Esophagus squamous epithelium (tissue), 5 donors: ENCODE measurements at regions of chr19 and their contacts with region 1.

Region 1: DNA sequence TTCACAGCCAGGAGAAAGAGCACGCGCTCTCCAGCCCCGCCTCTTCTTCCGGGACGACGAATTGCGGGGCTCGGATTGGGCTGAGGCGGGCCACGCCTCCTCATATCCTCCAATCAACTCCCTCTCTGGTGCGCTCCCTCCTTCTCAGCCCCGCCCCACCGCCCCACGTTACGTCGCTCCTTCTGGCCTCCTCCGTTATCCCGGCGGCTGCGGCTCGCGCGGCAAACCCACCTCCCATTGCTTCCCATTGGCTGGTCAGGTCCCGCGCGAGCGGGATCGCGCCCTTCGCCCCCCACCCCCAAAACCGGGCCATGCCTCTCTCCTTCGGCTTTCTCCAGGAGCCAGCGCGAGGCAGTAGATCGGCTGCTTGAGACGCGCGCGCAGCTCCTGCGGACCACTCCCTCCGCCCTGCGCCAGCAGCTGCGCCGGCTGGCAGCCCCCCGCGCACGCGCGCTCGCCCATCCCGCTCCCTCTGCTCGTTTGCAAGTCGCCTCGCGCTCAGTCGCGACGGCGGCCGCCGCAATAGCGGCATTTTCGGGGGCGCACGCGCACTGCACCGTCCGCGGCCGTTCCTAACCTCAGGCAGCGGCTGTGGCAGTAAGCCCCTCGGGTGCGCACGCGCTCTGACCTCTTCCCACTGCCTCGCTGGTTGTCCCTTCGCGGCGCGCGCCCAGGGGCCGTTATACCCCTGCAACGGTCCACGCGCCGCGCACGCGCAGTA is 512 bp upstream of the ARHGAP35 start:
- DNase-seq: peak; percentile 87
- H3K4me3 ChIP-seq: peak overlapping the region; percentile 80 to 98 (median 97)
- H3K27ac ChIP-seq: peak overlapping the region; percentile 93 to 99 (median 98)
- H3K4me1 ChIP-seq: peaks cover 40 to 73% (median 51%) of the 10 kb centered on the region in 3 donors
- H3K27me3 ChIP-seq: no peaks in the 10 kb centered on the region
- CTCF ChIP-seq: peak in 2 of 6 experiments; percentile 6 to 12
- POLR2A ChIP-seq: peak in 2 of 4 donors; percentile 74 to 85

Region 2: DNA sequence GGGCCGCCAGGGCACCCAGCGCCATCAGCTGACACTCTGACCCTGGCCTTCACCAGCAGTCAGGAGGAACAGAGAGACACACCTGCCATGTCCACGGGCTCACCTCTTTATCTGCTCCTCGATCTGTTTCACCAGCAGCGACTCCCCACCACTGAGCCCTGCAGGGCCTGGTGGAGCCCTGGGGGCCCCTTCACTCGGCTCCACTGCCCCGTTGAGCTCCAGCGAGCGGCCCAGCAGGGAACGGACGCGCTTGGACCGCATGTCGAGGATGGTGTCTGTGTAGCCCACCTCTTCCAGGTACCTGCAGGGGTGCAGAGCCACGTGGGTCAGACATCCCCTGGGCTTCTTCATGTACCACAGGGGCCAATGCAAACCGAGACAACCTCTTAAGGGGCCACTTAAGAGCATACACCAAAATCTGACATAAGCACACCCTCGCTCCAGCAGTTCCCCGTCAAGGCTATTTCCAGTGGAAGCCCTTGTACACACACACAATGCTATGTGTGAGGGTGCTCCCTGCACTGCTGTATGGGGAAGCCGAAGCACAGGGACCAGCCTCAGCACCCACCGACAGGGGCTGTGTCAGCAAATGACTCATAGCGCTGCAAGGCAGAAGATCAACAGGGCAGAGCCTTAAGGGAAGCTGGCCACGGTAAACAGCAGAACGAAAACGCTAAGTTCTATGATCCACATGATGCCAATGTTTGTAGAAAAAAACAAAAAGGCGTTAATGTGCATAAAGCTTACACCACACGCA is 127.2 kb before region 1 on chr19:
- intact Hi-C with region 1: no loop called
- DNase-seq: no peak
- H3K4me3 ChIP-seq: no peak overlapping the region
- H3K27ac ChIP-seq: peak overlapping the region; percentile 50 to 69 (median 62)
- H3K4me1 ChIP-seq: peaks cover 32 to 78% (median 36%) of the 10 kb centered on the region in 3 donors
- H3K27me3 ChIP-seq: no peaks in the 10 kb centered on the region
- CTCF ChIP-seq: no peak
- POLR2A ChIP-seq: no peak

Region 3: GRCh38 chr19:46924874-46925547 is 64.7 kb after region 1 on chr19:
- intact Hi-C with region 1: loop called (anchors 10 kb)
- DNase-seq: no peak
- H3K4me3 ChIP-seq: no peak overlapping the region
- H3K27ac ChIP-seq: peak overlapping the region; percentile 73 to 88 (median 84)
- H3K4me1 ChIP-seq: peaks cover 42 to 71% (median 44%) of the 10 kb centered on the region in 3 donors
- H3K27me3 ChIP-seq: no peaks in the 10 kb centered on the region
- CTCF ChIP-seq: no peak
- POLR2A ChIP-seq: no peak

Region 4: DNA sequence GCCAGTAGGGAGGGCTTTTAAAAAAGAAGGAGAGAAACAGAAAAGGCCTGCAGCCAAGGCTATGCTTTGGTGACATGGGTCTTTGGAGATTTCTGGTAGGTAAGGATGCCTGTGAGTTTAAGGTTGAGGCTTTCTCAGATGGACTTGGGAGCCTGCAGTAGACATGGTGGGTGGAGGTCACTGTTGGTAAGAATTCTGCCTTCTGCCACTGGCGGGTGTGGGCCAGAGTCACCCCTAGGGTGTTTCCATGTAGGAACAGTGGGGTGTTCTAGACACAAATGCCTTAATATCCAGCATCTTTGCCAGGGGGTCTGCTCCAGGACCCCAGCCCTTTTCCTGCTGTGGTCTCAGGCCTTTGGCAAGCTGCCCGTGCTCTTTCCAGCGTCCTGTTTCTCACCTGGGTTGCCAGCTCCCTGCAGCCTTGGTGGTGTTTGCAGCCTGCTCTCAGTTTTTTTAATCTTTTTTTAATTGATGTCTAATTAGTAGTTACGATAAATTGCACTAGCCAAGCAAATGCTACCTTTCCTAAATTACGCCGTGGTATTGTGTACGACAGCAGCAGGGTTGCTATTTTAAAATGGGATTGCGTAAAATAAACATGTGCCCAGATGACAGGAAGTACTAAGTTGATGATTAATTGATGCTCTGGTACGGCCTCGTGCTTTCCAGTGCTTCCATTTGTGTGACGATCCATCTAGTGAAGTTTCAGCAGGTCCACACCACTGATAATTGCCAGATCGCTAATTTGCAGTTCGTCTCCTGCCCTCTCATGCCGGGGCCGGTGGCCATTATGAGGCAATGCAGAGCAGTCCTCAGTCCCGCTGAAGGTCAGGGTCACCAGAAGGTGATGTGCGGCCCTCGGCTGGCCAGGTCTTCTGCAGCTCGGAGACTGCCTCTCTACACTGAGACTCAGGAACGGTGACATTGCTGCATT is 124.1 kb after region 1 on chr19:
- intact Hi-C with region 1: loop called (anchors 5 kb)
- DNase-seq: no peak
- H3K4me3 ChIP-seq: no peak overlapping the region
- H3K27ac ChIP-seq: peak overlapping the region in 1 of 4 donors; percentile 14
- H3K4me1 ChIP-seq: peaks cover 7 to 55% (median 33%) of the 10 kb centered on the region in 3 donors
- H3K27me3 ChIP-seq: no peaks in the 10 kb centered on the region
- CTCF ChIP-seq: no peak
- POLR2A ChIP-seq: no peak